PC-3 (cell line): ENCODE measurements at regions of chr18 and their contacts with region 1.

Region 1: GRCh38 chr18:45839414-45840395 is 14.2 kb downstream of the SIGLEC15 start:
- DNase-seq: peak; percentile 62
- ATAC-seq: peak; percentile 89
- H3K4me3 ChIP-seq: no peak overlapping the region
- H3K27ac ChIP-seq: no peak overlapping the region
- H3K4me1 ChIP-seq: peaks cover 5% of the 10 kb centered on the region; the same call in 1 of the 2 replicates
- H3K27me3 ChIP-seq: no peaks in the 10 kb centered on the region
- CTCF ChIP-seq: peak; percentile 61

Region 2: DNA sequence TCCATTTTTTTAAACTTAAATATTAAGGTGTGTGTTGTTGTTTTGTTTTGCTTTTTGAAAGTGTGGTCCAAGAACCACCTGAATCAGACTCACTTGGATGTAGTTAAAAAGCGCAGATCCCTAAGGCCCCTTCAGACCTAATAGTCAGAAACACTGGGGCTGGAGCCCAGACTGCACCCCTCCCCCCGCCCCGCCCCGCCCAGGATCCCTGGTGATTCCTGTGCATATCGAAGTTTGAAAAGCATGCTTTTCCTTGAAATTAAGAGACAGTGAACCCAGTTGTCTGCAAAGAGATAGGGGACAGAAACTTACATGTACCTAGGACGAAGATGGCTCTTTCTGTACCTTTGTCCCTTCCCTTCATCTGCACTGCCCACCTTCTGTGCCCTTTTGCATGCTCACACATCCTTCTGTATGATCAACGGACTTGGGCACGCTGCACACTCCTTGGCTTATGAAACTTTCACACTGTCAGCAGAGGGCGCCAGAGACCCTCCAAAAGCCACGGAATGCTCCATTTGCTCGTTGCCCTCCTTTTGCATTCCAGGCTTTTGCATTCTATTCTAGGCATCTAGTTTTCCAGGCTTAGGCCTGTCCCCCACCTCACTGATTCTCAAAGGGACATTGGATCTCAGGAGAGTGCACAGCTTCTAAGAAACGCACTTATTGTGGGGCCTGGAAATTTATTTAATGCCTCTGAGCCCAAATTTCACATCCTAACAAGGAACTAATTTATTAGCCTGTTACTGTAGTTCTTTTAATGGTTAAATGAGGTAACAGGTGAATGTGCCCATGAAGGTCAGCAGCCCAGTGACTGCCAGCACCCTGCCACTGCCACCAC is 148.5 kb before region 1 on chr18:
- CTCF ChIA-PET with region 1: no interaction called
- POLR2A ChIA-PET with region 1: no interaction called
- intact Hi-C with region 1: loop called (anchors 1 kb)
- DNase-seq: peak; percentile 78
- ATAC-seq: peak; percentile 98
- H3K4me3 ChIP-seq: no peak overlapping the region
- H3K27ac ChIP-seq: no peak overlapping the region
- H3K4me1 ChIP-seq: peaks cover 5% of the 10 kb centered on the region; the same call in 1 of the 2 replicates
- H3K27me3 ChIP-seq: no peaks in the 10 kb centered on the region
- CTCF ChIP-seq: peak; percentile 71

Region 3: GRCh38 chr18:45722899-45723298 is 116.8 kb before region 1 on chr18:
- CTCF ChIA-PET with region 1: interaction called, 5 read pairs
- POLR2A ChIA-PET with region 1: no interaction called
- intact Hi-C with region 1: loop called (anchors 1 kb)
- DNase-seq: peak; percentile 64
- ATAC-seq: peak; percentile 92
- H3K4me3 ChIP-seq: no peak overlapping the region
- H3K27ac ChIP-seq: no peak overlapping the region
- H3K4me1 ChIP-seq: peaks cover 7% of the 10 kb centered on the region; the same call in 1 of the 2 replicates
- H3K27me3 ChIP-seq: no peaks in the 10 kb centered on the region
- CTCF ChIP-seq: peak; percentile 53

Region 4: GRCh38 chr18:45745817-45746461 is 93.8 kb before region 1 on chr18:
- CTCF ChIA-PET with region 1: no interaction called
- POLR2A ChIA-PET with region 1: no interaction called
- intact Hi-C with region 1: no loop called
- DNase-seq: no peak
- ATAC-seq: no peak
- H3K4me3 ChIP-seq: no peak overlapping the region
- H3K27ac ChIP-seq: no peak overlapping the region
- H3K4me1 ChIP-seq: peaks cover 12% of the 10 kb centered on the region
- H3K27me3 ChIP-seq: no peaks in the 10 kb centered on the region
- CTCF ChIP-seq: no peak

Region 5: GRCh38 chr18:45793306-45793965 is 46.3 kb before region 1 on chr18:
- CTCF ChIA-PET with region 1: no interaction called
- POLR2A ChIA-PET with region 1: no interaction called
- intact Hi-C with region 1: loop called (anchors 1 kb)
- DNase-seq: peak; percentile 91
- ATAC-seq: peak; percentile 89
- H3K4me3 ChIP-seq: no peak overlapping the region
- H3K27ac ChIP-seq: peak overlapping the region; percentile 98
- H3K4me1 ChIP-seq: peaks cover 13% of the 10 kb centered on the region
- H3K27me3 ChIP-seq: no peaks in the 10 kb centered on the region
- CTCF ChIP-seq: no peak

Region 6: DNA sequence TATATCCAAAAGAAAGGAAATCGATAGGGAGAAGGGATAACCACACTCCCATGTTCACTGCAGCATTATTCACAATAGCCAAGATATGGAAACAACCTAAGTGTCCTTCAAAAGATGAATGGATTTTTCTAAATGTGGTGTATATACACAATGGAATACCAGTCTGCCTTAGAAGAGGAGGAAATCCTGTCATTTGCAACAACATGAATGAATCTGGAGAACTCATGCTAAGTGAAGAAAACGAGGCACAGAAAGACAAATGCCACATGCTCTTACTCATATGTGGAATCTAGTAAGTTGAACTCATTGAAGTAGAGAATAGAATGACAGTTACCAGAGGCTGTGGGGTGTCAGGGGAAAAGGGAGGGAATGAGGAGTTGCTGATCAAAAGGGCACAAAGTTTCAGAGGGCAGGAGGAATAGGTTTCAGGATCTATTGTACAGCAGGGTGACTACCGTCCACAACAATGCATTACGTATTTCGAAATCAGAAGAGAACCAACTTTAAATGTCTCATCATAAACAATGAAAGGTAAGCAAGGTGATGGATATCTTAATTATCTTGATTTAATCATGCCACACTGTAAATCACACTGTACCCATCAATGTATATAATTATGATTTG is 31.8 kb after region 1 on chr18:
- CTCF ChIA-PET with region 1: no interaction called
- POLR2A ChIA-PET with region 1: no interaction called
- intact Hi-C with region 1: no loop called
- DNase-seq: peak; percentile 30
- ATAC-seq: no peak
- H3K4me3 ChIP-seq: no peak overlapping the region
- H3K27ac ChIP-seq: no peak overlapping the region
- H3K4me1 ChIP-seq: peaks cover 4% of the 10 kb centered on the region; the same call in 1 of the 2 replicates
- H3K27me3 ChIP-seq: no peaks in the 10 kb centered on the region
- CTCF ChIP-seq: no peak

Region 7: DNA sequence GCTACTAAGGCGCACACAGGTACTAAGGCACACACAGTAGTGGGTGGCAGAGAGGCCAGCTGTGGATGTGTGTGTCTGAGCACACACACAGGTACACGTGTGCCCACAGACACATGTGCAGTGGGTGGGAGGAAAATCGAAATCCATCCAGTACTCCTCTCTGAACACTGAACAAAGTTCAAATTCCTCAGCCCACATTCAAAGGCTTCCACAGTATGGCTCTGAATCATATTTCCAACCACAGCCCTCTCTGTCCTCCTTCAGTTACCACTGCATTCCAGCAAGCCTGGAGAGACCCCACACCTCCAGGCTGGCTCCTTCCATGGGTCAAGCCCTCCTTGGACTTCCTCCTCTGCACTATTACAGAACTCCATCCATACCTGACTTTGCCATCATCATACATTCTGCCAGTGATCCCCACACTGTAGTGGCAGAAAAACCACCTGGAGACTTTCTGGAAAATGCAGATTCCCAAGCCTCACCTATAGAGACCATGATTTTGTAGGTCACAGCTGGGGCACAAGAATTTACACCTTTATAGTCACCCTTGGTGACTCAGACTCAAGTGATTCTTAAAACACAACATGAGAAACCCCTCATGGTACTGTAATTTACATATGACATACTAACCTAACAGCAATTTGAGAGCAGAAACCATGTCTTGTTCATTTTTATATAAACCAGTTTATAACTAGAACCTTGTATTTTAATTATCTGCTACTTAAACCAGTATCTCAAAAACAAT is 96.1 kb after region 1 on chr18:
- CTCF ChIA-PET with region 1: no interaction called
- POLR2A ChIA-PET with region 1: no interaction called
- intact Hi-C with region 1: no loop called
- DNase-seq: no peak
- ATAC-seq: no peak
- H3K4me3 ChIP-seq: no peak overlapping the region
- H3K27ac ChIP-seq: no peak overlapping the region
- H3K4me1 ChIP-seq: no peaks in the 10 kb centered on the region
- H3K27me3 ChIP-seq: no peaks in the 10 kb centered on the region
- CTCF ChIP-seq: no peak